ENCODE measurements at regions of chr18 and their contacts with region 1.

Region 1: GRCh38 chr18:31555971-31556747 is 35.5 kb upstream of the TTR start:
- DNase-seq: peak in 16 of 35 experiments; percentile 2 to 73 (median 12)
- ATAC-seq: peak in 3 of 4 experiments; percentile 27 to 42 (median 32)
- H3K4me3 ChIP-seq: no peak overlapping the region
- H3K4me3 Mint-ChIP-seq: no peak overlapping the region
- H3K27ac ChIP-seq: no peak overlapping the region
- H3K27ac Mint-ChIP-seq: no peak overlapping the region
- H3K4me1 ChIP-seq: no peaks in the 10 kb centered on the region
- H3K4me1 Mint-ChIP-seq: peaks cover 0 to 2% (median 0%) of the 10 kb centered on the region in 3 donors
- H3K27me3 ChIP-seq: peaks cover 0 to 2% of the 10 kb centered on the region in 2 experiments
- H3K27me3 Mint-ChIP-seq: peaks cover 12 to 13% of the 10 kb centered on the region in 2 donors

Region 2: DNA sequence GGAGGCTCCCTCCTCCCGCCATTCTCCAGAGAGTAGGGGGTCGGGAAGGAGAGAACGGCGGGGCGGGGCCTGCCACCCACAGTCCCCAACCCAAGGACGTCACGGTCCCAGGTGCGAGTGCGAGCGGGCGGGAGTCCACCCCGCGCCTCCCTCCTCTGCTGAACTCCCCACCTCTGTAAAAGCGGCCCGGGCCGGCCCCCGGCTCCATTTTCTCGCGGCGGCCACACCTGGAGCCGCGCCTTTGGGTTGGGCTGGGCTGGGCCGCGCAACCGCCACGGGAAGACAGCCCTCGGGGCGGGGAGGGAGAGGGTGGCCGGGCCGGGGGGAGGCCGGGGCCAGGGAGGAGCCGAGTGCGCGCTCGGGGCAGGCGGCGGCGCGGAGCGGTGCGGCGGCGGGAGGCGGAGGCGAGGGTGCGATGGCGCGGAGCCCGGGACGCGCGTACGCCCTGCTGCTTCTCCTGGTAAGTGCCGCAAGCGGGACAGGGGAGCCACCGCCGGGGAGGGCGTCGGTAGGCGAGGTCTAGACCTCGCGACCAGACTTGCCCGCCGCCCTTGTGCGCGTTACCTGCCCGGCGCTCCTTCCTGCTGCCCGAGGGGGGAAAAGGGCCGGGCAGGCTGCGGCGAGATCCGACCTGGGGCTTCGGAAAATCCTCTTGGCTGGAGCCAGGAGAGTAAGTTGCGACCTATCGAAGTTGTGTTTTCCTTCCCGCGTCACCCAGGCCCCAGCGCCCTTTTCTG is 58.2 kb before region 1 on chr18 and contains the start of gene DSG2:
- CTCF ChIA-PET with region 1: no interaction called
- POLR2A ChIA-PET with region 1: no interaction called
- DNase-seq: peak in 15 of 35 experiments; percentile 0 to 22 (median 3)
- ATAC-seq: peak; percentile 42 to 76 (median 49)
- H3K4me3 ChIP-seq: peak within 1 kb of the TSS; percentile 15 to 77
- H3K4me3 Mint-ChIP-seq: peak within 1 kb of the TSS; percentile 68 to 75 (median 68)
- H3K27ac ChIP-seq: no peak within 1 kb of the TSS
- H3K27ac Mint-ChIP-seq: no peak within 1 kb of the TSS
- H3K4me1 ChIP-seq: peaks cover 0 to 9% of the 10 kb centered on the region in 2 experiments
- H3K4me1 Mint-ChIP-seq: peaks cover 0 to 9% (median 5%) of the 10 kb centered on the region in 3 donors
- H3K27me3 ChIP-seq: peaks cover 2 to 18% of the 10 kb centered on the region in 2 experiments
- H3K27me3 Mint-ChIP-seq: peaks cover 32 to 35% of the 10 kb centered on the region in 2 donors
- total RNA-seq, gene DSG2: 0.07 to 0.83 (median 0.53) TPM

Region 3: DNA sequence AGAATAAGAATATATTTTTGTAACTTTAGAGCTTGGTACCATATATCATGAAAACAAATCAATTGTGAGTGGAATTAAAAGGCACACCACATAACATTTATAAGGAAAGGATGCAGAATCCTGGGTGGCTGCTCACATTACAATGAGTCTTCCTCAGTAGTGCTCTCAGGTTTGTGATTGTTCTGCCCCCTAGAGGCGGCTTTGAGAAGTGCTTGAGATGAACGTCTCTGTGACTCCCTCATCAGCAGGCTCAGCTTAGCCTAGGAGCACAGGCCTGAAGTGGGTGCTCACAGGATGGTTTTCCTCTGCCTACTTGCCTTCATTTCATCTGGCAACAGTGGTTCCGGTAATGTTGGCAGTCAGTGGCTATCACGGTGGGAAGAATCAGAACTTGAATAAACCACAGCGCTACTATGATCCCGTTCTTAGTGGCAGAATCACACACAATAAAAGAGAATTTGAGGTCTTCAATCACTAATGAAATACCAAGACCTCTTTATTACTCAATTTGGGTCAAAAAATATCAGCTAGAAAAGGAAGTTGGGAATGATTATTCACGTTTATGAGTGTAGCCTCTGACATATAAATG is 166.3 kb after region 1 on chr18:
- CTCF ChIA-PET with region 1: interaction called, 11 to 15 read pairs
- POLR2A ChIA-PET with region 1: no interaction called
- DNase-seq: peak in 34 of 35 experiments; percentile 17 to 81 (median 54)
- ATAC-seq: peak; percentile 65 to 84 (median 72)
- H3K4me3 ChIP-seq: no peak overlapping the region
- H3K4me3 Mint-ChIP-seq: no peak overlapping the region
- H3K27ac ChIP-seq: no peak overlapping the region
- H3K27ac Mint-ChIP-seq: no peak overlapping the region
- H3K4me1 ChIP-seq: no peaks in the 10 kb centered on the region
- H3K4me1 Mint-ChIP-seq: peaks cover 4 to 7% (median 5%) of the 10 kb centered on the region in 3 donors
- H3K27me3 ChIP-seq: peaks cover 0 to 27% of the 10 kb centered on the region in 2 experiments
- H3K27me3 Mint-ChIP-seq: peaks cover 22 to 38% of the 10 kb centered on the region in 2 donors

Measured in T-cell (primary cell).